Activated B cell treated with CpG ODN at 0.5 μM for 24 hours (primary cell): ENCODE measurements at regions of chr1 and their contacts with region 1.

Region 1: GRCh38 chr1:179034720-179035119 is 9.0 kb downstream of the FAM20B start:
- DNase-seq: no peak
- ATAC-seq: peak; percentile 80
- H3K4me3 Mint-ChIP-seq: peak overlapping the region; percentile 63
- H3K27ac Mint-ChIP-seq: peak overlapping the region; percentile 87
- H3K4me1 Mint-ChIP-seq: peaks cover 89% of the 10 kb centered on the region
- H3K27me3 Mint-ChIP-seq: no peaks in the 10 kb centered on the region
- CTCF ChIP-seq: no peak

Region 2: DNA sequence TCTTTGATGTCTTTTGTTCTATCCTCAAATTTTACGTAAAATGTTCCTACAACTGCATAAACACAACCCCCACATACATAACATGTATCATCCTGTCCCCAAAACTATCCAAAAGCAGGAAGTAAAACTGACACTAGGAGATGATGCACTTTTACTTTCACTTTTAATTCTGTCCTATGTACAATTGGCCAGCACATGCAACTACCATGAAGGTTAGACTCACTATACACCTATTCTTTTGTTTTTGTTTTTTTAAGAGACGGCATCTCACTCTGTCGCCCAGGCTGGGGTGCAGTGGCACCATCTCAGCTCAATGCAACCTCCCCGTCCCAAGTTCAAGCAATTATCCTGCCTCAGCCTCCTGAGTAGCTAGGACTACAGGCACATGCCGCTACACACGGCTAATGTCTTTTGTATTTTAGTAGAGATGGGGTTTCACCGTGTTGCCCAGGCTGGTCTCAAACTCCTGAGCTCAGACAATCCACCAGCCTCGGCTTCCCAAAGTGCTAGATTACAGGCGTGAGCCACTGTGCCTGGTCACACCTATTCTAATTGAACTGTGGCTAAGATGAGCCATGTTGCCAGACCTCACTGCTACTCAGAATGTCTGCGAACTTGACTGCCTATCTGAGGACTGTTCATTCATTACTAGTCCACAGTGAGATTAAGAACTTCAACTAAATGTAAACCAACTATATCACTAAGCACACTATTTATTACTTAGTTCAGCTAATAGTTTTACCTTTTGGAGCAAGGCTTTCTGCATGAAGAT is 95.2 kb after region 1 on chr1:
- CTCF ChIA-PET with region 1: no interaction called
- POLR2A ChIA-PET with region 1: no interaction called
- intact Hi-C with region 1: loop called (anchors 2 kb)
- DNase-seq: no peak
- ATAC-seq: peak; percentile 99
- H3K4me3 Mint-ChIP-seq: peak overlapping the region; percentile 45
- H3K27ac Mint-ChIP-seq: peak overlapping the region; percentile 79
- H3K4me1 Mint-ChIP-seq: peaks cover 13% of the 10 kb centered on the region
- H3K27me3 Mint-ChIP-seq: no peaks in the 10 kb centered on the region
- CTCF ChIP-seq: no peak